B cell (primary cell): ENCODE measurements at regions of chr1 and their contacts with region 1.

Region 1: DNA sequence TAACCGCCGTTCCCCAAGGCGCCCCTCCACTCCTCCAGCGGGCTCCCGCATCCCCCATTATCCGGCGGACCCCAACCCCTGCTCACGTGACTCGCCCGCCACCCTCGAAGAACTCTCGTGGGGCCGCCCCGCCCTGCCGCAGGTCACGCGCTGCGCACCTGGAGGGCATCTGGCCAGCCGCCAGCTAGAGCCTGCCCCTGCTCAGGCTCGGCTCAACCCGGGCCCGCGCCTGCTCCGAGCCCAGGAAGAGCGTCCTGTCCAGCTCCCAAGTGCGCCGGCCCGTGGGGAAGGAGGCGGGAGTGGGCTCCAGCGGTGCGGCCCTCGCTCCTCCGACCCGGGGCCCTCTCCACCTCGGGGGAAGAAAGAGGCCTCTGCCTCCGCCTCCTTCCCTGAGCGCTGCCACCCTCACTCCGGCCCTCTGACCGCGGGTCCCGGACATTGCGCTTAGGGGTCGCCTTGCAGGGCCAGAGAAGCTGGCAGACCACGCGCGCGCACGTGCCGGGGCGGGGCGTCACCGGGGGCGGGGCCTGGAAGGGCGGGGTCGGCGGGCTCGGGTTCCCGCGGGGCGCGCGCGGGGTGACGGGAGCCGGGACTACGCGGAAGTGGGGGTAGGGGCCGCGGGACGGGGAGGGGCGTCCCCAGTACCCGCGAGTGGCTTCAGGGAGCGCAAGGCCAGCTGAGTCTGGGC is 28.4 kb downstream of the HMGN2 start:
- DNase-seq: peak; percentile 96
- ATAC-seq: peak; percentile 75
- H3K4me3 ChIP-seq: peak overlapping the region in 4 of 5 experiments; percentile 74 to 93 (median 88)
- H3K4me3 Mint-ChIP-seq: peak overlapping the region; percentile 91
- H3K27ac ChIP-seq: peak overlapping the region; percentile 100
- H3K27ac Mint-ChIP-seq: peak overlapping the region; percentile 98
- H3K4me1 ChIP-seq: peaks cover 7 to 19% of the 10 kb centered on the region in 2 donors
- H3K4me1 Mint-ChIP-seq: peaks cover 8% of the 10 kb centered on the region
- H3K27me3 ChIP-seq: no peaks in the 10 kb centered on the region
- H3K27me3 Mint-ChIP-seq: no peaks in the 10 kb centered on the region
- CTCF ChIP-seq: peak; percentile 44

Region 2: DNA sequence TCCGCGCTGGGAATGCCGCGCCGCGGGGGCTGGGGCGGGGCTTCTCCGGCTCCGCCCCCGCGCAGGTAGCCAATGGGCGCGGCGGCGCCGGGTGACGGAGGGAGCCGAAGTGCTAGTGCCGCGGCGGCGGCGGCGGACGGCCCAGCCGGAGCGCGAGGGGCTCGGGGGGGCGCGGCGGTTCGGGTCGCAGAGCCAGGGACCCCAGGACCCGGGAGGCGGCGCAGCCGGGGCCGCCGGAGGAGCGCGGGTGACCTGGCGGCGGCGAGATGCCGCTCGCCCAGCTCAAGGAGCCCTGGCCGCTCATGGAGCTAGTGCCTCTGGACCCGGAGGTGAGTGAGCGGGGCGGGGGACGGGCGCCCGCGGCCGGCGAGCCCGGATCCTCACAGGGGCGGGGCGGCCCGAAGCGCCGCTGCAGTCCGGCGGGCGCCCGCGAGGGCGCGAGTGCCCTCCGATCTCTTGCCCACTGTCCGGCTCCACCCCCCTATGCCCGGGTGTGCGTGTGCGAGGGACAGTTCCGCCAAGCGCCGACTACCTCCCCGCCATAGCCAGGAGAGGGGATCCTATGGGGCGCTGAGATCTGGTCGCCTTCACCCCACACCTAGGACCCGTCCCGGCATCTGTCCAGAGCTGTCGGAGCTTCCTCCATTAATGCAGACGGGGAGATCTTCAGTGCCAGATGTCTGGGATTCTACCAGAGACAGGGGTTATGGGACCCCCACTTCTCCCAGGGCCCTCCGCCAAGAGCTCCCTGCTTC is 29.2 kb after region 1 on chr1 and contains the start of gene RPS6KA1:
- CTCF ChIA-PET with region 1: interaction called, 15 read pairs
- POLR2A ChIA-PET with region 1: interaction called, 11 read pairs
- intact Hi-C with region 1: loop called (anchors 1 kb)
- DNase-seq: peak; percentile 78
- ATAC-seq: peak; percentile 93
- H3K4me3 ChIP-seq: peak within 1 kb of the TSS; percentile 60 to 80 (median 68)
- H3K4me3 Mint-ChIP-seq: peak within 1 kb of the TSS; percentile 90
- H3K27ac ChIP-seq: peak within 1 kb of the TSS in 1 of 2 donors; percentile 49
- H3K27ac Mint-ChIP-seq: peak within 1 kb of the TSS; percentile 86
- H3K4me1 ChIP-seq: peaks cover 24 to 33% of the 10 kb centered on the region in 2 donors
- H3K4me1 Mint-ChIP-seq: peaks cover 35% of the 10 kb centered on the region
- H3K27me3 ChIP-seq: no peaks in the 10 kb centered on the region
- H3K27me3 Mint-ChIP-seq: peaks cover 1% of the 10 kb centered on the region
- CTCF ChIP-seq: no peak
- total RNA-seq, gene RPS6KA1: 99.9 and 109 TPM in 2 replicates

Region 3: GRCh38 chr1:26645734-26646133 is 145.1 kb after region 1 on chr1:
- CTCF ChIA-PET with region 1: no interaction called
- POLR2A ChIA-PET with region 1: no interaction called
- intact Hi-C with region 1: no loop called
- DNase-seq: no peak
- ATAC-seq: no peak
- H3K4me3 ChIP-seq: no peak overlapping the region
- H3K4me3 Mint-ChIP-seq: no peak overlapping the region
- H3K27ac ChIP-seq: no peak overlapping the region
- H3K27ac Mint-ChIP-seq: no peak overlapping the region
- H3K4me1 ChIP-seq: no peaks in the 10 kb centered on the region
- H3K4me1 Mint-ChIP-seq: no peaks in the 10 kb centered on the region
- H3K27me3 ChIP-seq: no peaks in the 10 kb centered on the region
- H3K27me3 Mint-ChIP-seq: no peaks in the 10 kb centered on the region
- CTCF ChIP-seq: no peak